ENCODE measurements at regions of chr4 and their contacts with region 1.

Region 1: GRCh38 chr4:169757575-169758184 is at the start of gene HPF1:
- DNase-seq: peak; percentile 96
- H3K4me3 ChIP-seq: peak within 1 kb of the TSS; percentile 57 to 81 (median 80)
- H3K27ac ChIP-seq: peak within 1 kb of the TSS; percentile 75 to 80 (median 78)
- H3K4me1 ChIP-seq: peaks cover 0 to 18% (median 14%) of the 10 kb centered on the region in 4 donors
- H3K27me3 ChIP-seq: no peaks in the 10 kb centered on the region
- CTCF ChIP-seq: no peak
- EP300 ChIP-seq: peak in 2 of 4 donors; percentile 3 to 64
- POLR2A ChIP-seq: no peak
- total RNA-seq, gene HPF1: 22.7 to 70.3 (median 52.0) TPM

Region 2: DNA sequence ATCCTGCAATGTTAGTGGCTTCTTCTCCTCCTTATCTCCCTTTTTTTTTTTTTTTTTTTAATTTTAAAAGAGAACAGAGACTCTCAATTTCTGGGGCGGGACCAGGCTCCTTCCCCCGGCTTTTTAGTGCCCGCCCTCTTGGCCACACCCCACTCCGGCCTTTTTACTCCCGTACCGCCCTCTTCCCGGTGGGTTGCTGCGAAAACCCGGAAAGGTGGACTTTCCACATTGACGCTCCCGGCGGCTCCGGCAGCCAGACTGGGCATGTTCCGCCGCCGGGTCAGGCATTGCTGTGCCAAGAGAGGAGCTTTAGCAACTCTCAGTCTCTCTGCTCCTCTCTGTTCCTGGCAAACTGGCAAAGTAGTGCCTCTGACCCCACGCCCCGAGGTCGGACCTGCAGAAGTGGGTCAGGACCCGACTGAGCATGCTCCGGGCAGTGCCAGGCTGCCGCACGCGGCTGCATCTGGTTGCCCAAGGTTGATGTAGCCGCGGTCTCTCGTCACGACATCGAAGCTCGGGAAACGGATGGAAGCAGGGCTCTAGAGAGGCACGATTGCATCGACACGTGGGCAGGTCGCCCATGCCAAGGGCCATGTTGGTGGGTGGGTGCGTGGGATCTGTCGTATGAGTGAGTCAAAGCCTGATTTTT is 269.6 kb after region 1 on chr4:
- intact Hi-C with region 1: loop called (anchors 2 kb)
- DNase-seq: peak; percentile 97
- H3K4me3 ChIP-seq: peak overlapping the region; percentile 63 to 88 (median 80)
- H3K27ac ChIP-seq: peak overlapping the region; percentile 91 to 93 (median 93)
- H3K4me1 ChIP-seq: peaks cover 4 to 11% (median 9%) of the 10 kb centered on the region in 4 donors
- H3K27me3 ChIP-seq: no peaks in the 10 kb centered on the region
- CTCF ChIP-seq: no peak
- EP300 ChIP-seq: peak in 1 of 4 donors; percentile 7
- POLR2A ChIP-seq: no peak